Mucosa of descending colon (tissue), 3 donors: ENCODE measurements at regions of chr7 and their contacts with region 1.

Region 1: DNA sequence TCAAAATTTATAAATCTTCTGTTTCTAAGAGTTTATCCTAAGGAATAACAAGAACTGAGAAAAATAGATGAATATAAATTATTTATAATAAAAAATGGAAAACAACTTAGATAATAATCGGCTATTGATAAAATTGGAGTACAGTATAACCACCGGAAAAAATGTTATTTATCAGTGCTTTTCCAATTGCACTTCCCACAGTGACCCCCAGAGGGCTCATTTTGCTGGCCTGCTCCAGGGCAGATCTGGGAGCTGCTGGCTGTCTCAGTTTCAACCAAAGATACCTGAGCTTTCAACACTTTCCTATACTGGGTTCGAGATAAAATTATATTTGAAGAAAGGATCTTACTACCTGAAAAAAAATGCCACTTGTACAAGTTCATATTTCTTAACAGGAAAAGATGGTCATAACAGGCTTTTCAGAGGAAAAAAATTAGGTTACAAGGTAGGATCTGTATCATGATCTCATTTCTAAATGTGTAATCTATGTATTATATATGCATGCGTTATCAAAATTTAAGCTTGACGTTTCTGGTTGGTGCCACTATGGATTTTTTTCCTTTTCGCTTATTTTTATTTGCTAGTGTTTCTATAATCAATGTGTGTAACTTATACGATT is 165.7 kb downstream of the NPSR1 start:
- DNase-seq: peak in 2 of 3 donors; percentile 48 to 79
- ATAC-seq: peak; percentile 69
- H3K4me3 ChIP-seq: no peak overlapping the region
- H3K4me1 ChIP-seq: no peaks in the 10 kb centered on the region
- CTCF ChIP-seq: peak; percentile 65

Region 2: DNA sequence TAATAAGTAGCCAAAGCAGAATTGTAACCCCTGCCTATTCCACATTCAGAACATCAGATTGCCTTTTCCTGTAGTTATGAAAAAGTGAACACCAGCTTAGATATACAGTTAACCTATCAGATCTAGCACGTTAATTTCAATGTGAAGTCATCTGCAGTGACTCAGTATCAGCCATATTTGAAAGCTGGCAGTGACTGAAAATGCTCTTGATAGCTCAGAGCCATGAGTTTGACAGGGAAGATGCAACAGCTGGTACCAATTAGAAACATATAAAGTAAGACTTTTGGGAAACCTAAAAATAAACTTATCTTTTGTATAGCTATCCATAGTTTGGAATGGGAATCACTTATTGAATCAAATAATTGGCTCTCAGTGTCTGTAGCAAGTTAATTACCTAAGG is 449.8 kb before region 1 on chr7:
- intact Hi-C with region 1: no loop called
- DNase-seq: no peak
- ATAC-seq: no peak
- H3K4me3 ChIP-seq: no peak overlapping the region
- H3K4me1 ChIP-seq: no peaks in the 10 kb centered on the region
- CTCF ChIP-seq: no peak

Region 3: DNA sequence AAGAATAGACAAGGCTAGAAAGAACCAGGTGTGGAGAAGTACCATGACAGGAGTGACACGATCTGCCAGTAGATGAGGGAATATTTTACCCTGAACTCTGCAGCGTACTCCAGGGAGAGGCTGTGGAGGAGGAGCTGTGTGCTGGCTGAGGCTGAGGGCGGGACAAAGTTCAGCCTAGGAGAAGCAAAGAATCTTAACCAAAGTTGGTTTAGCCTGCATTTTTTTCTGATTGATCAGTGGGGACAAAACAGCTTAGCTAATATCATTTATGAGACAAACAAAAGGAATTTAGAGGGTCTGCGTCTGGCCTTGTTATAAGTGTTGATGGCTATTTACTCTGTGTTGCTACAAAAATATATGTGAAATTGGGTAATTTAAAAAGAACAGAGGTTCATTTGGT is 170.9 kb before region 1 on chr7:
- intact Hi-C with region 1: no loop called
- DNase-seq: peak in 2 of 3 donors; percentile 17 to 45
- ATAC-seq: peak; percentile 76
- H3K4me3 ChIP-seq: no peak overlapping the region
- H3K4me1 ChIP-seq: peaks cover 2% of the 10 kb centered on the region
- CTCF ChIP-seq: no peak

Region 4: GRCh38 chr7:35037526-35038339 is 214.0 kb after region 1 on chr7:
- intact Hi-C with region 1: loop called in 1 of 2 experiments (anchors 10 kb)
- DNase-seq: peak; percentile 96 to 97 (median 96)
- ATAC-seq: peak; percentile 92
- H3K4me3 ChIP-seq: peak overlapping the region; percentile 42
- H3K4me1 ChIP-seq: peaks cover 20% of the 10 kb centered on the region
- CTCF ChIP-seq: peak; percentile 77